Endothelial cell of umbilical vein (primary cell): ENCODE measurements at regions of chr9 and their contacts with region 1.

Region 1: GRCh38 chr9:9598723-9599122 is 1014.1 kb downstream of the PTPRD start:
- DNase-seq: no peak
- H3K4me3 ChIP-seq: no peak overlapping the region
- H3K27ac ChIP-seq: no peak overlapping the region
- H3K4me1 ChIP-seq: no peaks in the 10 kb centered on the region
- H3K27me3 ChIP-seq: no peaks in the 10 kb centered on the region
- CTCF ChIP-seq: no peak
- POLR2A ChIP-seq: no peak

Region 2: GRCh38 chr9:9536523-9536922 is 62.2 kb before region 1 on chr9:
- CTCF ChIA-PET with region 1: no interaction called
- POLR2A ChIA-PET with region 1: no interaction called
- dilution Hi-C with region 1: no loop called
- intact Hi-C with region 1: no loop called
- DNase-seq: no peak
- H3K4me3 ChIP-seq: no peak overlapping the region
- H3K27ac ChIP-seq: no peak overlapping the region
- H3K4me1 ChIP-seq: no peaks in the 10 kb centered on the region
- H3K27me3 ChIP-seq: no peaks in the 10 kb centered on the region
- CTCF ChIP-seq: no peak
- POLR2A ChIP-seq: no peak

Region 3: GRCh38 chr9:9585920-9586319 is 12.8 kb before region 1 on chr9:
- CTCF ChIA-PET with region 1: no interaction called
- POLR2A ChIA-PET with region 1: no interaction called
- dilution Hi-C with region 1: no loop called
- intact Hi-C with region 1: no loop called
- DNase-seq: no peak
- H3K4me3 ChIP-seq: no peak overlapping the region
- H3K27ac ChIP-seq: no peak overlapping the region
- H3K4me1 ChIP-seq: no peaks in the 10 kb centered on the region
- H3K27me3 ChIP-seq: no peaks in the 10 kb centered on the region
- CTCF ChIP-seq: no peak
- POLR2A ChIP-seq: no peak

Region 4: GRCh38 chr9:9912459-9912858 is 313.7 kb after region 1 on chr9:
- CTCF ChIA-PET with region 1: no interaction called
- POLR2A ChIA-PET with region 1: no interaction called
- dilution Hi-C with region 1: no loop called
- intact Hi-C with region 1: loop called (anchors 10 kb)
- DNase-seq: peak; percentile 12
- H3K4me3 ChIP-seq: no peak overlapping the region
- H3K27ac ChIP-seq: no peak overlapping the region
- H3K4me1 ChIP-seq: no peaks in the 10 kb centered on the region
- H3K27me3 ChIP-seq: no peaks in the 10 kb centered on the region
- CTCF ChIP-seq: peak; percentile 18 to 28
- POLR2A ChIP-seq: no peak